ENCODE measurements at regions of chr16 and their contacts with region 1.

Region 1: GRCh38 chr16:59289151-59289550 is 555.0 kb upstream of the GOT2 start:
- DNase-seq: no peak
- H3K4me3 ChIP-seq: no peak overlapping the region
- H3K27ac ChIP-seq: no peak overlapping the region
- H3K4me1 ChIP-seq: no peaks in the 10 kb centered on the region
- H3K27me3 ChIP-seq: no peaks in the 10 kb centered on the region
- CTCF ChIP-seq: no peak
- POLR2A ChIP-seq: no peak

Region 2: GRCh38 chr16:57663917-57664661 is 1625.1 kb before region 1 on chr16:
- intact Hi-C with region 1: loop called (anchors 5 kb)
- DNase-seq: no peak
- H3K4me3 ChIP-seq: no peak overlapping the region
- H3K27ac ChIP-seq: no peak overlapping the region
- H3K4me1 ChIP-seq: no peaks in the 10 kb centered on the region
- H3K27me3 ChIP-seq: no peaks in the 10 kb centered on the region
- CTCF ChIP-seq: no peak
- POLR2A ChIP-seq: no peak